Ascending aorta (tissue), 2 donors: ENCODE measurements at regions of chr3 and their contacts with region 1.

Region 1: GRCh38 chr3:123421353-123422174 is 27.3 kb downstream of the ADCY5 start:
- DNase-seq: no peak
- H3K4me3 ChIP-seq: no peak overlapping the region
- H3K27ac ChIP-seq: peak overlapping the region; percentile 85 to 87
- H3K4me1 ChIP-seq: peaks cover 34 to 87% of the 10 kb centered on the region in 2 donors
- H3K27me3 ChIP-seq: no peaks in the 10 kb centered on the region
- CTCF ChIP-seq: no peak

Region 2: GRCh38 chr3:123347684-123348264 is 73.8 kb before region 1 on chr3:
- intact Hi-C with region 1: loop called (anchors 5 kb)
- DNase-seq: no peak
- H3K4me3 ChIP-seq: no peak overlapping the region
- H3K27ac ChIP-seq: peak overlapping the region; percentile 64 to 71
- H3K4me1 ChIP-seq: peaks cover 12 to 67% of the 10 kb centered on the region in 2 donors
- H3K27me3 ChIP-seq: no peaks in the 10 kb centered on the region
- CTCF ChIP-seq: no peak

Region 3: GRCh38 chr3:123385981-123386380 is 35.6 kb before region 1 on chr3:
- intact Hi-C with region 1: loop called (anchors 5 kb)
- DNase-seq: peak in 1 of 2 donors; percentile 79
- H3K4me3 ChIP-seq: peak overlapping the region in 1 of 2 donors; percentile 12
- H3K27ac ChIP-seq: peak overlapping the region; percentile 90 to 93
- H3K4me1 ChIP-seq: peaks cover 16 to 65% of the 10 kb centered on the region in 2 donors
- H3K27me3 ChIP-seq: no peaks in the 10 kb centered on the region
- CTCF ChIP-seq: no peak

Region 4: GRCh38 chr3:123405021-123405420 is 16.5 kb before region 1 on chr3:
- intact Hi-C with region 1: loop called (anchors 2 kb)
- DNase-seq: no peak
- H3K4me3 ChIP-seq: peak overlapping the region in 1 of 2 donors; percentile 40
- H3K27ac ChIP-seq: peak overlapping the region; percentile 87 to 93
- H3K4me1 ChIP-seq: peaks cover 11 to 59% of the 10 kb centered on the region in 2 donors
- H3K27me3 ChIP-seq: no peaks in the 10 kb centered on the region
- CTCF ChIP-seq: no peak